Naive thymus-derived CD4-positive, alpha-beta T cell (primary cell): ENCODE measurements at regions of chrX and their contacts with region 1.

Region 1: GRCh38 chrX:77899081-77899828 is at the start of gene COX7B:
- DNase-seq: peak; percentile 17 to 93 (median 87)
- ATAC-seq: peak; percentile 77
- H3K4me3 ChIP-seq: peak within 1 kb of the TSS; percentile 75
- H3K4me3 Mint-ChIP-seq: peak within 1 kb of the TSS; percentile 87 to 98 (median 92)
- H3K27ac ChIP-seq: peak within 1 kb of the TSS; percentile 89
- H3K27ac Mint-ChIP-seq: peak within 1 kb of the TSS; percentile 91 to 97 (median 96)
- H3K4me1 ChIP-seq: peaks cover 6 to 8% of the 10 kb centered on the region in 2 donors
- H3K4me1 Mint-ChIP-seq: peaks cover 4 to 31% (median 22%) of the 10 kb centered on the region in 7 donors
- H3K27me3 ChIP-seq: no peaks in the 10 kb centered on the region
- H3K27me3 Mint-ChIP-seq: no peaks in the 10 kb centered on the region
- total RNA-seq, gene COX7B: 98.9 to 261 (median 103) TPM

Region 2: DNA sequence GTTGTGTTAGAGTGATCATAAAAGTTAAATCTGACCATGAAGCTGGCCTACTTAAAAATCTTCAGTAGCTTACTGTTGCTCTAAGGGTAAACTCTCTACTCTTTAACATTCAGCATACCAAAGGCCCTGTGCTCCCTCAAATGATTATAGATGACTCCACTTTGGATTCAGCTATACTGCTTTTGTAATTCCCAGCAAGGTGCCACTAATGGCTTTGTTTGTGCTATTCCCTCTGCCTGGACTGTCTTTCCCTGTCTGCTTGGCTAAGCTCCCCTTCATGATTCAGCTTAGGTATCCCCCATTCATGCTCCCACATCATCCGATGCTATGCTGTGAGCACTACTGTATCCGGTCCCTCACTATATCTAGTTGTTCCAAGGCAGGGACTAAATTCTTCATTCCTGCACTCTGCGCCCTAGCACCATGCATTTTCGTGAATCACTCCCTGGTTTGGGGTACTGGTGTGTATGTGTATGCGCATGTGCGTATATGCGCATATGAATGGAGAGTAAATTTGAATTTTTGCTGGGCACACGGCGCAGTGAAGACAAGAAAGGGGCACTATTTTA is 1726.8 kb before region 1 on chrX:
- CTCF ChIA-PET with region 1: no interaction called
- POLR2A ChIA-PET with region 1: interaction called, 3 read pairs
- intact Hi-C with region 1: loop called in 1 of 2 experiments (anchors 2 kb)
- DNase-seq: no peak
- ATAC-seq: peak; percentile 56
- H3K4me3 ChIP-seq: peak overlapping the region; percentile 74
- H3K4me3 Mint-ChIP-seq: peak overlapping the region; percentile 87 to 97 (median 92)
- H3K27ac ChIP-seq: peak overlapping the region; percentile 81
- H3K27ac Mint-ChIP-seq: peak overlapping the region; percentile 92 to 97 (median 95)
- H3K4me1 ChIP-seq: peaks cover 19 to 20% of the 10 kb centered on the region in 2 donors
- H3K4me1 Mint-ChIP-seq: peaks cover 25 to 52% (median 48%) of the 10 kb centered on the region in 7 donors
- H3K27me3 ChIP-seq: no peaks in the 10 kb centered on the region
- H3K27me3 Mint-ChIP-seq: no peaks in the 10 kb centered on the region

Region 3: GRCh38 chrX:77446029-77446585 is 453.1 kb before region 1 on chrX:
- CTCF ChIA-PET with region 1: no interaction called
- POLR2A ChIA-PET with region 1: no interaction called
- intact Hi-C with region 1: loop called in 1 of 2 experiments (anchors 2 kb)
- DNase-seq: no peak
- ATAC-seq: no peak
- H3K4me3 ChIP-seq: peak overlapping the region; percentile 33
- H3K4me3 Mint-ChIP-seq: peak overlapping the region; percentile 72 to 84 (median 79)
- H3K27ac ChIP-seq: no peak overlapping the region
- H3K27ac Mint-ChIP-seq: no peak overlapping the region
- H3K4me1 ChIP-seq: peaks cover 5 to 6% of the 10 kb centered on the region in 2 donors
- H3K4me1 Mint-ChIP-seq: peaks cover 0 to 19% (median 13%) of the 10 kb centered on the region in 7 donors
- H3K27me3 ChIP-seq: no peaks in the 10 kb centered on the region
- H3K27me3 Mint-ChIP-seq: peaks cover 17 to 38% (median 34%) of the 10 kb centered on the region in 5 donors

Region 4: GRCh38 chrX:77910108-77910840 is 11.0 kb after region 1 on chrX and contains the start of gene ATP7A:
- CTCF ChIA-PET with region 1: interaction called, 15 read pairs
- POLR2A ChIA-PET with region 1: interaction called, 62 read pairs
- intact Hi-C with region 1: loop called (anchors 1 kb)
- DNase-seq: peak; percentile 62 to 94 (median 88)
- ATAC-seq: peak; percentile 97
- H3K4me3 ChIP-seq: peak within 1 kb of the TSS; percentile 98
- H3K4me3 Mint-ChIP-seq: peak within 1 kb of the TSS; percentile 91 to 100 (median 96)
- H3K27ac ChIP-seq: peak within 1 kb of the TSS; percentile 93
- H3K27ac Mint-ChIP-seq: peak within 1 kb of the TSS; percentile 94 to 99 (median 98)
- H3K4me1 ChIP-seq: peaks cover 3 to 10% of the 10 kb centered on the region in 2 donors
- H3K4me1 Mint-ChIP-seq: peaks cover 6 to 28% (median 16%) of the 10 kb centered on the region in 7 donors
- H3K27me3 ChIP-seq: no peaks in the 10 kb centered on the region
- H3K27me3 Mint-ChIP-seq: no peaks in the 10 kb centered on the region
- total RNA-seq, gene ATP7A: 10.9 to 17.4 (median 17.0) TPM

Region 5: DNA sequence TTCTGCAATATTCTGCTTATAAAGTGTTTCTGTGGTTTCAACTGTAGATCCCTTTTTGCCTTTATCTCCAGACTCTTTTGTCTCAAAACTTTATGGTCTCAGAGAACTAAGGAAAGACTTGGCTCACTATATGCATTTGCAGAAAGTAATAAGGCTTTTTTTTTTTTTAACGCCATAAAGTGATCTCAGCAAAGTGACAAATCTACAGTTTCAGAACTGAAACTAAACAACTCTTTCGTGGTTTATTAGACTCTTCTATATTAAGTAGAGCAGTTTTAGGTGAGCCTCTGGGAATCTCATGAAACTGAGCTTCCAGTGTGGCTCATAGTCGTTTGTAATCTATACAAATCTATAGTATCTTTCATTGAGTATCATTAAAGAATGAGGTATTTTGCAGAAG is 26.5 kb after region 1 on chrX:
- CTCF ChIA-PET with region 1: no interaction called
- POLR2A ChIA-PET with region 1: no interaction called
- intact Hi-C with region 1: no loop called
- DNase-seq: no peak
- ATAC-seq: no peak
- H3K4me3 ChIP-seq: no peak overlapping the region
- H3K4me3 Mint-ChIP-seq: peak overlapping the region in 1 of 10 donors; percentile 44
- H3K27ac ChIP-seq: no peak overlapping the region
- H3K27ac Mint-ChIP-seq: no peak overlapping the region
- H3K4me1 ChIP-seq: no peaks in the 10 kb centered on the region
- H3K4me1 Mint-ChIP-seq: peaks cover 4 to 20% (median 12%) of the 10 kb centered on the region in 7 donors
- H3K27me3 ChIP-seq: no peaks in the 10 kb centered on the region
- H3K27me3 Mint-ChIP-seq: no peaks in the 10 kb centered on the region

Region 6: GRCh38 chrX:77937271-77937670 is 38.0 kb after region 1 on chrX:
- CTCF ChIA-PET with region 1: no interaction called
- POLR2A ChIA-PET with region 1: no interaction called
- intact Hi-C with region 1: no loop called
- DNase-seq: no peak
- ATAC-seq: no peak
- H3K4me3 ChIP-seq: no peak overlapping the region
- H3K4me3 Mint-ChIP-seq: no peak overlapping the region
- H3K27ac ChIP-seq: no peak overlapping the region
- H3K27ac Mint-ChIP-seq: no peak overlapping the region
- H3K4me1 ChIP-seq: no peaks in the 10 kb centered on the region
- H3K4me1 Mint-ChIP-seq: peaks cover 0 to 11% (median 0%) of the 10 kb centered on the region in 7 donors
- H3K27me3 ChIP-seq: no peaks in the 10 kb centered on the region
- H3K27me3 Mint-ChIP-seq: no peaks in the 10 kb centered on the region

Region 7: DNA sequence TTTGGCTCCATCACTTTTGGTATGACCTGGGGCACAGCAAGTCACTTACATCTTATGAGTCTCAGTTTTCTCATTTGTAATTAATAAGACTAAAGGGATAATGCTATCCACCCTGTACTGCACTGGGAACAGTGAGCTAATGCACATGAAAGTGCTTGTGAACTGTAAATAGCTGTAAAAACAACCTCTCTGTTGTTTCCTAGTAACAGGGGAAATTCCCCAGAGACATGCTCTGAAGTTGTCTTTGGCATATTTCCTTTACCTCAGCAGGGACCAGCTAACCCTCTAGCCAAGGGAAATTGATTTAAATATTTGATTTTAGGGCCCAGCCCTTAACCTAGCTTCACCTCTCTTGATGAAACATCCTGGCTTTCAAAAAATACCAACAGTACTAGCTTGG is 434.3 kb after region 1 on chrX:
- CTCF ChIA-PET with region 1: no interaction called
- POLR2A ChIA-PET with region 1: no interaction called
- intact Hi-C with region 1: loop called (anchors 2 to 5 kb)
- DNase-seq: peak in 7 of 9 donors; percentile 33 to 77 (median 55)
- ATAC-seq: peak; percentile 88
- H3K4me3 ChIP-seq: no peak overlapping the region
- H3K4me3 Mint-ChIP-seq: peak overlapping the region in 9 of 10 donors; percentile 3 to 70 (median 19)
- H3K27ac ChIP-seq: peak overlapping the region; percentile 75
- H3K27ac Mint-ChIP-seq: peak overlapping the region; percentile 60 to 99 (median 89)
- H3K4me1 ChIP-seq: peaks cover 9 to 38% of the 10 kb centered on the region in 2 donors
- H3K4me1 Mint-ChIP-seq: peaks cover 22 to 86% (median 67%) of the 10 kb centered on the region in 7 donors
- H3K27me3 ChIP-seq: no peaks in the 10 kb centered on the region
- H3K27me3 Mint-ChIP-seq: no peaks in the 10 kb centered on the region

Region 8: GRCh38 chrX:79259073-79259689 is 1359.9 kb after region 1 on chrX:
- CTCF ChIA-PET with region 1: no interaction called
- POLR2A ChIA-PET with region 1: no interaction called
- intact Hi-C with region 1: loop called in 1 of 2 experiments (anchors 10 kb)
- DNase-seq: peak; percentile 4 to 84 (median 74)
- ATAC-seq: peak; percentile 95
- H3K4me3 ChIP-seq: peak overlapping the region; percentile 23
- H3K4me3 Mint-ChIP-seq: peak overlapping the region; percentile 10 to 86 (median 79)
- H3K27ac ChIP-seq: peak overlapping the region; percentile 78
- H3K27ac Mint-ChIP-seq: peak overlapping the region; percentile 83 to 98 (median 94)
- H3K4me1 ChIP-seq: peaks cover 52 to 65% of the 10 kb centered on the region in 2 donors
- H3K4me1 Mint-ChIP-seq: peaks cover 26 to 90% (median 82%) of the 10 kb centered on the region in 7 donors
- H3K27me3 ChIP-seq: no peaks in the 10 kb centered on the region
- H3K27me3 Mint-ChIP-seq: no peaks in the 10 kb centered on the region